Activated CD4-positive, alpha-beta memory T cell treated with anti-CD3 and anti-CD28 coated beads for 36 hours (primary cell): ENCODE measurements at regions of chr2 and their contacts with region 1.

Region 1: DNA sequence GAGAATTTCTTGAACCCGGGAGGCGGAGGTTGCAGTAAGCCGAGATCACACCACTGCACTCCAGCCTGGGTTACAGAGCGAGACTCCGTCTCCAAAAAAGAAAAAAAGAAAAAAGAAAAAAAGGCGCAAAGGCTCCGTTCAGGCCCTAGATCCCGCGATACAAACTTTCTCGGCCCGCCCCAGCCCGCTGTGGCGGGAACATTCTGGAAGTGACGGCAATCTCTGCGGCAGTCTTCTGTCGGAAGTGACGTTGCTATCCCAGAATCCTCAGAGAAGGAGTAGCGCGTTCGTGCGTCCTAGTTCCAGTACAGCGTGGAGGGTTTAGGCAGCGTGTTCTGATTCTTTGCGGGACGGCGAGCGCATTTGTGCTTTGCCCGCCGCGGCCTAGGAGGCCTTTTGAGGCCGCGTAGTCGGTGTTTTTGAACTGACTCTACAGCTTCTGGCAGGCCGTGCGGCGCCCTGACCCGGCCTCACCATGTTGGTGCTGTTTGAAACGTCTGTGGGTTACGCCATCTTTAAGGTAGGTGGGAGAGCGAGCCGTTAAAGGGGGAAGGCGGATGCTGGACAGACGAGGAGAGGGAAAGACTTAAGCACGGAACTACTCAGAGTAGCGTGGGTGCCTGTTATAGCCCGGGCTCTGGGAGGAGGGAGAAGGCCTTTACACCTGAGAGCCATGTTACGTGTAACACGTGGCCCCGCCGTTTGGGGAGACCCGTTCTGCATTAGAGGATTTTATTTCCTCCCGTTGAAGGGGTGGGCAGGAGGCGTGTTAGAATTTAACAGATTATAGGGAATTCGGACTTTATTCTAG is at the start of gene NOP58:
- DNase-seq: peak; percentile 96
- H3K4me3 Mint-ChIP-seq: peak within 1 kb of the TSS; percentile 49
- H3K27ac Mint-ChIP-seq: peak within 1 kb of the TSS; percentile 70
- H3K4me1 Mint-ChIP-seq: peaks cover 19% of the 10 kb centered on the region
- H3K27me3 Mint-ChIP-seq: no peaks in the 10 kb centered on the region
- total RNA-seq, gene NOP58: 151 to 155 TPM

Region 2: DNA sequence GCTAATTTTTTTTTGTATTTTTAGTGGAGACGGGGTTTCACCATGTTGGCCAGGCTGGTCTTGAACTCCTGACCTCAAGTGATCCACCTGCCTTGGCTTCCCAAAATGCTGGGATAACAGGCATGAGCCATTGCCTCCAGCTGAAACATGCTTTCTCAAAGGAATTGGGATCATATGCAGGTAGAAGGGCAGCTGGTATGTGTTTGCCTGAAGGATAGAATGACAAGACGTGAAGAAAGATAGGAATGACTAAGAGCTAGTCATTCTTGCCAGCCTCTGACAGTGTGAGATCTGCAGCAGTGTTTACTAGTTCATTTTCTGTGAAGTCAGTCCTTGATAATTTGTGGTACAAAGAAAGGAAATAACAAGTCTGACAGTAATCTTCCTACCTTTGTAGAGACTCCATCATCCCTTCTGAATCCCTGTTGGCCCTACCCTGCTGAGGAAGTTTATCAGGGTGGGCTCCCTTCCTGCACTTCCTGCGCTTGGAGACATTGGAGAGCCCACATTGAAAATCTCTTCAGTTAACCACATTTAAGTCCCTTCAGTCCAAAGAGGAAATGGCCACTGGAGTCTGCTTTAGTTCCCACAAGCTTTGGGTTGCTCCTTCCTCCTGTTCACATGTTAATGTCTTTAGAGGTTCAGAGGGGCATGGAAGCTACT is 1135.0 kb before region 1 on chr2:
- CTCF ChIA-PET with region 1: no interaction called
- POLR2A ChIA-PET with region 1: no interaction called
- intact Hi-C with region 1: loop called (anchors 2 kb)
- DNase-seq: peak; percentile 55
- H3K4me3 Mint-ChIP-seq: peak overlapping the region; percentile 92
- H3K27ac Mint-ChIP-seq: peak overlapping the region; percentile 94
- H3K4me1 Mint-ChIP-seq: peaks cover 54% of the 10 kb centered on the region
- H3K27me3 Mint-ChIP-seq: no peaks in the 10 kb centered on the region

Region 3: DNA sequence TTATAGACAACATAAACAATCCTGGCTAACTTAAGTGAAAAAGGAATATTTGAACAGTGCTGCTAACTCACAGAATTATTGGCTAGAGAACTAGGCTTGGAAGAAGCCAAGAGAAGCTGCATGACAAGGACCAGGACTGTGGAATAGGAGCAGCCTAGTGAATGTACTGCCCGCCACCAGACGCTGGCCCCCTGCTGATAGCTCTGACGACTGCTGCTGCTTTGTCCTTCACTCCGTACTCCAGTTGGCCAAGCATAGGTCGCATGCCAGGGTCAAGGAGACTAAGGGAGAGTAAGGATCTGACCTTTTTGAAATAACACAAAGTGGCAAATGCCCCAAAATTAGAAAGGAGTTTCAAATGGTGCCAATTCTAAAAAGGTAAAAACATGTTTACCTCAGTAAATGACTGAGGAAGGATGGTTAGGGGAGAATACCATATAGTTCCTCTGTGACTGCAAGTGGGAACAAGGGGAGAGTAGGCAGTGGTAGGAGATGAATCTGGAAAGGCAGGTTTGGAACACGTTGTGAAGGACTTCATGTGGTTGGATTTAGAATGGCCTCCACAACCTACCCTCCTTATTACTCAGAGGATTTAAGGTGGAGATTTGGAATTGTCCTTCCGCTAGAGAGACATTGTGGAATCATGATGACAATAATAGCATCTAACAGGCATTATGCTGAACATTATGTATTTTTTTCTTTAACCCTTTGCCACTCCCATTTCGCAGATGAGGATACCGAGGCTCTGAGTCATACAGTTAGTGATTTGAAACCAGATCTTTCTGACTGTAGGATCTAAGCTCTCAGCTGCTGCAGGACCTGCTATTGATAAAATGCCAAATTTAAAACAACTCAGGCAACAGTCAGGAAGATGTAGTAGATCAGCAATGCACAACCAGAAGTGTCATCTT is 794.6 kb before region 1 on chr2:
- CTCF ChIA-PET with region 1: no interaction called
- POLR2A ChIA-PET with region 1: no interaction called
- intact Hi-C with region 1: no loop called
- DNase-seq: no peak
- H3K4me3 Mint-ChIP-seq: no peak overlapping the region
- H3K27ac Mint-ChIP-seq: no peak overlapping the region
- H3K4me1 Mint-ChIP-seq: peaks cover 3% of the 10 kb centered on the region
- H3K27me3 Mint-ChIP-seq: no peaks in the 10 kb centered on the region

Region 4: GRCh38 chr2:202238234-202239197 is 27.2 kb before region 1 on chr2 and contains the start of gene SUMO1:
- CTCF ChIA-PET with region 1: no interaction called
- POLR2A ChIA-PET with region 1: interaction called, 16 read pairs
- intact Hi-C with region 1: loop called (anchors 1 kb)
- DNase-seq: peak; percentile 97
- H3K4me3 Mint-ChIP-seq: peak within 1 kb of the TSS; percentile 98
- H3K27ac Mint-ChIP-seq: peak within 1 kb of the TSS; percentile 95
- H3K4me1 Mint-ChIP-seq: peaks cover 23% of the 10 kb centered on the region
- H3K27me3 Mint-ChIP-seq: peaks cover 1% of the 10 kb centered on the region
- total RNA-seq, gene SUMO1: 114 to 119 TPM

Region 5: DNA sequence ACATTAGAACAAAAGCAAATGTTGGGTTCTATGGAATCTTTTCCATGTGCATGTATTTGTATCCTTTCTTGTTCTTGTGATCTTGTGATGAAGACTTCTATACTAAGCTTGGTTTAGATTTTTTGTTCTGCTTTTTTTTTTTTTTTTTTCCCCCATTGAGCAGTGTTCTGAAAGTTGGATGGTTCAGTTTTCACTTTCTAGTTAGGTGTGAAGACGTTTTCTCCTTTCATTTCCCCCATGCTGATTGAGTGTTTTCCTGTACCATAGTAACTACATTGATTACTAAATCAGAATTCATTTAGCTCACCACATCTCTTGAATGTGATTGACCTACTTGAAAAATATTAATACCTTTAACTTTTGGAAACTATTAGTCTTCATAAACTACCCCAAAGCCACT is 34.0 kb after region 1 on chr2:
- CTCF ChIA-PET with region 1: interaction called, 3 read pairs
- POLR2A ChIA-PET with region 1: interaction called, 9 read pairs
- intact Hi-C with region 1: loop called (anchors 5 kb)
- DNase-seq: no peak
- H3K4me3 Mint-ChIP-seq: no peak overlapping the region
- H3K27ac Mint-ChIP-seq: peak overlapping the region; percentile 69
- H3K4me1 Mint-ChIP-seq: peaks cover 39% of the 10 kb centered on the region
- H3K27me3 Mint-ChIP-seq: no peaks in the 10 kb centered on the region